Stomach (tissue), 19 donors: ENCODE measurements at regions of chr12 and their contacts with region 1.

Region 1: DNA sequence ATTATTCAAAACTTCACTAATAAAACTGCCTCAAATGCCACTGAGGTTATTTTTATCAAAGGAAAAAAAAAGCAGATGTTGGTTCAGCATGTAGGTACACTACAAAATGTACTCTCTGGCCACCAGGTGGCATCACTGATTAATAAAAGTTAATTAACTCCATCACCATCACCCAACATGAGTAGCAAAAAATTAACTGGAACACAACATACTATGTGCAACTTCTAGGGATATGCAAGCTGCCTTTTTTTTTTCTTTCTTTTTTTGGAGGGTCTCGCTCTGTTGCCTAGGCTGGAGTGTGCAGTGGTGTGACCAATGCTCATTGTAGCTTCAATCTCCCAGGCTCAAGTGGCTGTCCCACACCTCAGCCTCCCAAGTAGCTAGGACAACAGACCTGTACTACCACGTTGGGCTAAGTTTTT is 43.8 kb upstream of the NR2C1 start:
- DNase-seq: peak; percentile 74 to 89
- H3K4me3 ChIP-seq: no peak overlapping the region
- H3K27ac ChIP-seq: peak overlapping the region in 2 of 5 donors; percentile 12 to 60
- H3K4me1 ChIP-seq: peaks cover 0 to 22% (median 9%) of the 10 kb centered on the region in 4 donors
- H3K27me3 ChIP-seq: no peaks in the 10 kb centered on the region
- CTCF ChIP-seq: peak in 5 of 7 experiments; percentile 44 to 83 (median 75)
- EP300 ChIP-seq: no peak
- POLR2A ChIP-seq: no peak

Region 2: DNA sequence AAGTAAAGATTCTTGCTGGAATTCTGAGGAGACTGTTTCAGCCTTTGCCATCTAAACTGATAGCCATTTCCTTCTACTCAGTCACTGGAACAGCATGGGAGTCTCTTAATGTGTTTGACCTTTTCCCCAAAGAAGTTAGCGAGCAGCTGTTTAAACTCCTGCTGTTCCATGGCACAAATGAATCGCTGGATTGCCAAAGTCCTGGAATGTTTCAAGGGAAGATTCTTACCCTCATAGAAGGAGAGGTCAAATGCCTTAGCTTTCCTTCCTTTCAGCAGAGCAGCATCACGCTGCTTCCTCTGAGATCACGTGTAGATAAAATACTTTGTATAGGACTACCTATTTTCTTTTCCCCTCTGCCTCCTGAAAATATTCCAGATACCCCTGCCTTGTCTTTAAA is 33.3 kb before region 1 on chr12:
- intact Hi-C with region 1: no loop called
- DNase-seq: peak in 1 of 2 donors; percentile 71
- H3K4me3 ChIP-seq: no peak overlapping the region
- H3K27ac ChIP-seq: peak overlapping the region in 3 of 5 donors; percentile 31 to 54 (median 49)
- H3K4me1 ChIP-seq: peaks cover 0 to 18% (median 10%) of the 10 kb centered on the region in 4 donors
- H3K27me3 ChIP-seq: no peaks in the 10 kb centered on the region
- CTCF ChIP-seq: no peak
- EP300 ChIP-seq: peak; percentile 33
- POLR2A ChIP-seq: no peak

Region 3: DNA sequence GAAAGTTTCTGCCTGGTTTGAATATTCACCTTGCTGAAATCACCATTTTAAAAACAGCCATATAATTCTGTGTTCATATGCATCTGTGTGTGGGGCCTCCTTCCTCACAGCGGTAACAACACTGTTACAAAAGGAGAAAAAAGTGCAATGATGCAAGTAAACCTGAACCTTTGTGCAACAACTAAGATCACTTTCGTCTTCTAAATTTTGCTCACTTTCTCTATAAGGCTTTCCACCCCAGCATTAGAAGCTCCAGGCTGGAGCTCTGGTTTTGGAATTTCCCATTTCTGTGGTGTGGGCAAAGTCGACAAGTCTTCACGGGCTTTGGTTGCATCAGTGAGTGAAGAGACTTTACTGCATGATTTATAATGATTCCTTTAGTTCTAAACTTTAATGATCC is 81.7 kb after region 1 on chr12:
- intact Hi-C with region 1: no loop called
- DNase-seq: no peak
- H3K4me3 ChIP-seq: no peak overlapping the region
- H3K27ac ChIP-seq: no peak overlapping the region
- H3K4me1 ChIP-seq: peaks cover 0 to 35% (median 16%) of the 10 kb centered on the region in 4 donors
- H3K27me3 ChIP-seq: no peaks in the 10 kb centered on the region
- CTCF ChIP-seq: no peak
- EP300 ChIP-seq: no peak
- POLR2A ChIP-seq: no peak

Region 4: GRCh38 chr12:95336390-95337067 is 219.3 kb after region 1 on chr12:
- intact Hi-C with region 1: loop called (anchors 5 kb)
- DNase-seq: peak; percentile 79 to 93
- H3K4me3 ChIP-seq: no peak overlapping the region
- H3K27ac ChIP-seq: peak overlapping the region in 4 of 5 donors; percentile 28 to 70 (median 52)
- H3K4me1 ChIP-seq: peaks cover 0 to 19% (median 7%) of the 10 kb centered on the region in 4 donors
- H3K27me3 ChIP-seq: no peaks in the 10 kb centered on the region
- CTCF ChIP-seq: peak in 5 of 7 experiments; percentile 62 to 93 (median 72)
- EP300 ChIP-seq: no peak
- POLR2A ChIP-seq: no peak

Region 5: GRCh38 chr12:95412482-95413311 is 295.5 kb after region 1 on chr12:
- intact Hi-C with region 1: no loop called
- DNase-seq: peak in 1 of 2 donors; percentile 23
- H3K4me3 ChIP-seq: no peak overlapping the region
- H3K27ac ChIP-seq: no peak overlapping the region
- H3K4me1 ChIP-seq: no peaks in the 10 kb centered on the region
- H3K27me3 ChIP-seq: peaks cover 0 to 17% (median 0%) of the 10 kb centered on the region in 3 donors
- CTCF ChIP-seq: no peak
- EP300 ChIP-seq: no peak
- POLR2A ChIP-seq: no peak

Region 6: GRCh38 chr12:95532851-95533250 is 415.7 kb after region 1 on chr12:
- intact Hi-C with region 1: loop called (anchors 10 kb)
- DNase-seq: peak in 1 of 2 donors; percentile 66
- H3K4me3 ChIP-seq: no peak overlapping the region
- H3K27ac ChIP-seq: no peak overlapping the region
- H3K4me1 ChIP-seq: peaks cover 0 to 13% (median 5%) of the 10 kb centered on the region in 4 donors
- H3K27me3 ChIP-seq: no peaks in the 10 kb centered on the region
- CTCF ChIP-seq: no peak
- EP300 ChIP-seq: no peak
- POLR2A ChIP-seq: no peak